H1 (cell line): ENCODE measurements at regions of chr6 and their contacts with region 1.

Region 1: GRCh38 chr6:159726918-159727716 is at the start of gene WTAP:
- DNase-seq: peak; percentile 82 to 96
- H3K4me3 ChIP-seq: peak within 1 kb of the TSS; percentile 82 to 99 (median 96)
- H3K27ac ChIP-seq: peak within 1 kb of the TSS; percentile 100
- H3K4me1 ChIP-seq: peaks cover 0 to 5% (median 2%) of the 10 kb centered on the region in 4 experiments; a peak in 3 of 7 replicates
- H3K27me3 ChIP-seq: no peaks in the 10 kb centered on the region
- CTCF ChIP-seq: no peak
- EP300 ChIP-seq: peak in 1 of 2 experiments; percentile 36; a peak in 1 of 3 replicates
- POLR2A ChIP-seq: peak; percentile 97 to 98
- RAD21 ChIP-seq: no peak
- total RNA-seq, gene WTAP: 112 and 120 TPM in 2 replicates

Region 2: GRCh38 chr6:159646733-159647132 is 80.4 kb before region 1 on chr6:
- CTCF ChIA-PET with region 1: no interaction called
- POLR2A ChIA-PET with region 1: no interaction called
- DNase-seq: no peak
- H3K4me3 ChIP-seq: no peak overlapping the region
- H3K27ac ChIP-seq: no peak overlapping the region
- H3K4me1 ChIP-seq: no peaks in the 10 kb centered on the region
- H3K27me3 ChIP-seq: no peaks in the 10 kb centered on the region
- CTCF ChIP-seq: no peak
- EP300 ChIP-seq: no peak
- POLR2A ChIP-seq: no peak
- RAD21 ChIP-seq: no peak

Region 3: GRCh38 chr6:159693128-159693893 is 33.8 kb before region 1 on chr6 and contains the start of gene SOD2:
- CTCF ChIA-PET with region 1: interaction called, 4 read pairs
- POLR2A ChIA-PET with region 1: interaction called, 32 read pairs
- DNase-seq: peak; percentile 53 to 92
- H3K4me3 ChIP-seq: peak within 1 kb of the TSS; percentile 51 to 99 (median 88)
- H3K27ac ChIP-seq: peak within 1 kb of the TSS; percentile 95
- H3K4me1 ChIP-seq: peaks cover 3 to 15% (median 8%) of the 10 kb centered on the region in 4 experiments
- H3K27me3 ChIP-seq: no peaks in the 10 kb centered on the region
- CTCF ChIP-seq: no peak; a peak in 1 of 4 replicates
- EP300 ChIP-seq: peak in 1 of 2 experiments; percentile 96; a peak in 2 of 3 replicates
- POLR2A ChIP-seq: peak; percentile 74 to 85
- RAD21 ChIP-seq: no peak
- total RNA-seq, gene SOD2: 88.7 and 96.9 TPM in 2 replicates

Region 4: DNA sequence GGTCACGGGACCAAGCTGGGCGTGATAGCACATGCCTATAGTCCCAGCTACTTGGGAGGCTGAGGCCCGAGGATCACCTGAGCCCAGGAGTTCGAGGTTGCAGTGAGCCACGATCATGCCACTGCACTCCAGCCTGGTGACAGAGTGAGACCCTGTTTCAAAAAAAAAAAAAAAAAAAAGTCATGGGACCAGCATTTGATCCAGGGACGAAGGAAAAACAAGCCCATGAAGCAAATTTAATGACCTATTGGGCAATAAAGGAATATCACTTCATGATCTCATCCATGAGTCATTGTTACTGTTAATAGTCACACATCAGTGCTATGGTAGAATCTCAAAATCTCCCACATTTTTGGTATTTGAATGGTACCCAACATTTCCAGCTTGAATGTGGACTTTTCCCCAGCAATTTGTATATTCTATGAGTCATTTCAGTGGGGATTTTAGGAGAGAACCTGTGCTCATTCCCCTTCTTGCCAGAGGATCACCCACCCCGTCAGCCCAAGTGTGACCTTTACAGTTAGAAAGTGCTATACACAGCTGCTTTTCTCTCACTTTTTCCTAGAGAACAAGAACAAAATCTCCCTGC is 25.6 kb before region 1 on chr6:
- CTCF ChIA-PET with region 1: no interaction called
- POLR2A ChIA-PET with region 1: interaction called, 10 read pairs
- DNase-seq: no peak
- H3K4me3 ChIP-seq: no peak overlapping the region
- H3K27ac ChIP-seq: no peak overlapping the region
- H3K4me1 ChIP-seq: no peaks in the 10 kb centered on the region
- H3K27me3 ChIP-seq: no peaks in the 10 kb centered on the region
- CTCF ChIP-seq: no peak
- EP300 ChIP-seq: no peak
- POLR2A ChIP-seq: no peak
- RAD21 ChIP-seq: no peak

Region 5: GRCh38 chr6:159739341-159739740 is 12.2 kb after region 1 on chr6:
- CTCF ChIA-PET with region 1: no interaction called
- POLR2A ChIA-PET with region 1: interaction called, 43 read pairs
- DNase-seq: no peak
- H3K4me3 ChIP-seq: no peak overlapping the region
- H3K27ac ChIP-seq: no peak overlapping the region
- H3K4me1 ChIP-seq: peaks cover 0 to 3% (median 0%) of the 10 kb centered on the region in 4 experiments; a peak in 1 of 7 replicates
- H3K27me3 ChIP-seq: no peaks in the 10 kb centered on the region
- CTCF ChIP-seq: no peak
- EP300 ChIP-seq: no peak
- POLR2A ChIP-seq: no peak
- RAD21 ChIP-seq: no peak

Region 6: GRCh38 chr6:159819932-159820640 is 93.0 kb after region 1 on chr6:
- CTCF ChIA-PET with region 1: no interaction called
- POLR2A ChIA-PET with region 1: no interaction called
- DNase-seq: no peak
- H3K4me3 ChIP-seq: no peak overlapping the region
- H3K27ac ChIP-seq: no peak overlapping the region
- H3K4me1 ChIP-seq: peaks cover 0 to 11% (median 5%) of the 10 kb centered on the region in 4 experiments; a peak in 5 of 7 replicates
- H3K27me3 ChIP-seq: no peaks in the 10 kb centered on the region
- CTCF ChIP-seq: no peak
- EP300 ChIP-seq: no peak
- POLR2A ChIP-seq: no peak
- RAD21 ChIP-seq: no peak